IMR-90 (cell line): ENCODE measurements at regions of chr9 and their contacts with region 1.

Region 1: GRCh38 chr9:29773676-29774075 is 2200.4 kb upstream of the C9orf72 start:
- DNase-seq: no peak
- ATAC-seq: no peak
- H3K4me3 ChIP-seq: no peak overlapping the region
- H3K27ac ChIP-seq: no peak overlapping the region
- H3K4me1 ChIP-seq: no peaks in the 10 kb centered on the region
- H3K27me3 ChIP-seq: no peaks in the 10 kb centered on the region
- CTCF ChIP-seq: no peak
- POLR2A ChIP-seq: no peak
- RAD21 ChIP-seq: no peak

Region 2: DNA sequence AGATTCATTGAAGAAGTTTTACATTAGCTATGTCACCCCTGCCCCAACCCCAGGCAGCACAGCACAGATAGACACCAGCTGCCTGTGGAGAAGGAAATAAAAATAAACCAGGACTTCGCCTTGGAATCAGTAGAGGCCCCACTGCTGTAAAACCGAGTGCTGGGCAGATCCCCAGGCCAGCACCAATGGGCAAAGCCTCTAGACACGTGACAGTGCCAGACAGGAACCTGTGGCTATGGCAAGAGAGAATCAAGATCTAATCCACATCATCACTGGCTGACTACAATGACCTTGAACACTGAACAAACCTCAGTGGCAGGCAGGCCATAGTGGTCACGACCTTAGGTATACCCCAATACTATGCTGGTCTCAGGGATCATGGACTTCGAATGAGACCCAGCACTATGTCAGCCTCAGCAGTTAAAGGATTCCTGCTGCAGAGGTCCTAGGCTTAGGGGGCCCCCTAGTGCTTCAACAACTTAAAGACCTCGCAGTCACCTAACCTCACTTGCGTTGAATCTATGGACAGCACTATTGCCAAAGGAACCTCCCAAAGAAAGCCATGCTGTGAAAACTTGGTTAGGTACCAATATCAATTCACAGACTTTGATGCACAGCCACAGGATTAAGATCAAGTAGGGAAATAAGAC is 81.8 kb before region 1 on chr9:
- CTCF ChIA-PET with region 1: no interaction called
- POLR2A ChIA-PET with region 1: no interaction called
- dilution Hi-C with region 1: no loop called
- in situ Hi-C with region 1: no loop called
- intact Hi-C with region 1: no loop called
- DNase-seq: no peak
- ATAC-seq: no peak
- H3K4me3 ChIP-seq: no peak overlapping the region
- H3K27ac ChIP-seq: no peak overlapping the region
- H3K4me1 ChIP-seq: no peaks in the 10 kb centered on the region
- H3K27me3 ChIP-seq: no peaks in the 10 kb centered on the region
- CTCF ChIP-seq: 0 out of 2 replicates have a peak, but pooled peaks have one; percentile 6
- POLR2A ChIP-seq: no peak
- RAD21 ChIP-seq: peak; percentile 37; the same call in 1 of the 2 replicates

Region 3: DNA sequence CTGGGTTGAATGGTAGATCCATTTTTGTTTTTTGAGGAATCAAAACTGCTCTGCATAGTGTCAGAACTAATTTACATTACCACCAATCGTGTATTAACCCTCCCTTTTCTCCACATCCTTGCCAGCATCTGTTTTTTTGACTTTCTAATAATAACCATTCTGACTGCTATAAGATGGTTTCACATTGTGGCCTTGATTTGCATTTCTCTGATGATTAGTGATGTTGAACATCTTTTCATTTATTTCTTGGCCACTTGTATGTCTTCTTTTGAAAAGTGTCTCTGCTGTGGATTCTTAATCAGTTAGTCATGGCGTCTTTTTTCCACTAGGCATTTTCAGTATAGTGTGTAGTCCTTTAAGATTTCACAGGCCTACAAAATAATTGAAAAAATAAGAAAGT is 56.0 kb before region 1 on chr9:
- CTCF ChIA-PET with region 1: no interaction called
- POLR2A ChIA-PET with region 1: no interaction called
- dilution Hi-C with region 1: no loop called
- in situ Hi-C with region 1: no loop called
- intact Hi-C with region 1: loop called (anchors 5 kb)
- DNase-seq: no peak
- ATAC-seq: no peak
- H3K4me3 ChIP-seq: no peak overlapping the region
- H3K27ac ChIP-seq: no peak overlapping the region
- H3K4me1 ChIP-seq: no peaks in the 10 kb centered on the region
- H3K27me3 ChIP-seq: no peaks in the 10 kb centered on the region
- CTCF ChIP-seq: no peak
- POLR2A ChIP-seq: no peak
- RAD21 ChIP-seq: no peak

Region 4: DNA sequence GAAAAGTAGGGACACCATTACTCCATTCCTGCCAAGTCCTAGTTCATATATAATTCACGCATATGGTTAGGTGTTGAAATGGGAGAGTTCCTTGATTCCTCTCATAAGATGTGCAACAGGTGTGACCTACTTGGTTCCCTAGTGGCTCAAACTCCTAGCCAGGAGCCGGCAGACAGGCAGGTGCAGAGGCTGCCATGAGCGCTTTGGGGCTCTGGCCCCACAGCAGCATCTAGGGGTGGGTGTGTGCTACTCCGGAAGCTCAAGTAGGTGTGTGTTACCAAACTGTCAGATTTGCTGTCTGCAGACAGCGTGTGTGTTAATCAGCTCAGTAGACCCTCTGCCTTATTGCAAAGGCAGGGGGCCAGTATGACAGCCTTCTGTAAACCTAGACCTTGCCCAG is 958.4 kb after region 1 on chr9:
- CTCF ChIA-PET with region 1: no interaction called
- POLR2A ChIA-PET with region 1: no interaction called
- dilution Hi-C with region 1: no loop called
- in situ Hi-C with region 1: no loop called
- intact Hi-C with region 1: loop called (anchors 5 kb)
- DNase-seq: no peak
- ATAC-seq: no peak
- H3K4me3 ChIP-seq: no peak overlapping the region
- H3K27ac ChIP-seq: no peak overlapping the region
- H3K4me1 ChIP-seq: no peaks in the 10 kb centered on the region
- H3K27me3 ChIP-seq: no peaks in the 10 kb centered on the region
- CTCF ChIP-seq: no peak
- POLR2A ChIP-seq: no peak
- RAD21 ChIP-seq: no peak